HAP-1 (cell line): ENCODE measurements at regions of chr6 and their contacts with region 1.

Region 1: GRCh38 chr6:55886185-55886836 is 10.9 kb upstream of the BMP5 start:
- DNase-seq: peak in 1 of 2 experiments; percentile 34
- H3K4me3 ChIP-seq: no peak overlapping the region
- H3K4me1 ChIP-seq: no peaks in the 10 kb centered on the region
- H3K27me3 ChIP-seq: no peaks in the 10 kb centered on the region

Region 2: GRCh38 chr6:55617272-55617671 is 269.0 kb before region 1 on chr6:
- in situ Hi-C with region 1: loop called (anchors 25 kb)
- DNase-seq: peak; percentile 23 to 69
- H3K4me3 ChIP-seq: no peak overlapping the region
- H3K4me1 ChIP-seq: no peaks in the 10 kb centered on the region
- H3K27me3 ChIP-seq: no peaks in the 10 kb centered on the region

Region 3: DNA sequence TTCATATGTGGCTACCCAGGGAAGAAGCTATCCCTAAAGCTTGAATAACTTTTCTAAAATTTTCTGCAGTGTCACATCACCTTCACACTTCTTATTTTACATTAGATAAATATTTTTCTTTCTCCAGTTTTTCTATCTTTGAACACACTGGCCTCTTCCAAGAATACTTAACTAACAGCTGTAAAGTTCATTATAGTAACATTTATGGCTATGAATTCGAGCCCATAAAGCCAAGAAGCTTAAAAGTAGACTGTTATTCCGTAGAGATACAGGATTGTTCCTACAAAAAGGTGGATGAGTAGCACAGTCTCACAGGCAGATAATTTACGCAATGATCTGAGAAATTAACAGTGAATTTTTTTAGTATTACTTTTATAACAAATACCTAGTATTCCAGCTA is 44.8 kb after region 1 on chr6:
- in situ Hi-C with region 1: no loop called
- DNase-seq: no peak
- H3K4me3 ChIP-seq: no peak overlapping the region
- H3K4me1 ChIP-seq: no peaks in the 10 kb centered on the region
- H3K27me3 ChIP-seq: no peaks in the 10 kb centered on the region

Region 4: DNA sequence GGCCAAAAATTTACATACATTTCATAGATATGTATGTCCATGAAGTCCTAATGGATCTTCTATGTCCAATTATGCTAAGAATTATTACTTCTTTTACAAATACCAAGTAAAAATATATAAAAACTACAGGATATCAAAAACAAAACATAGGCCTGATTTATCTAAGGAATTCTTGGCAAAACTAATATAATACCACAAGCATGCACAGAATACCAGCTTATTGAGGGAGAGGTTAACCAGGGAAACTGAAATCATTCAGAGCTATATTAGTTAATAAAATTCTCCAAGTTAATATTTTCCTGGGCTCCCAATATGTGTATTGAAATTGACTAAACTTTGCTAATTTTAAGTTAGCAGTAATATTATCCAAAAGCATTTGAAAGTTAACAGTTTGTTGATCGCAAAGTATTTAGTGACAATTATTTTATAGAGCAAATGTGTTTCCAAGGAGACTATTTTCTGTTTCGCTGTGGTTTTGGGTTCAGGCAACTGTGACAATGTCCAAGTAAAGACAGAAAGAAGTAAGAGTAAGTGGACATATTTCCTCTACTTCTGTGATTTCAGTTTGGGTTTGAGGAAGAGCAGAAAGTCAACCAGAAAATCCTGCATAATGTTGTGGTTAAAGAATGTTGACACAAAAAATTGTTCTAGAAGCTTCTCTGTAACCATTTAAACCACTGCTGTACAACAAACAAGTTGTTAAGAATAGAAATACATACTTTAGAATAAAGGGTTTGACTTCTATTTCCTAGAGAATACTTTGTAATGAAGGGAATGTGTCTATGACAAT is 193.6 kb after region 1 on chr6:
- in situ Hi-C with region 1: no loop called
- DNase-seq: no peak
- H3K4me3 ChIP-seq: no peak overlapping the region
- H3K4me1 ChIP-seq: no peaks in the 10 kb centered on the region
- H3K27me3 ChIP-seq: no peaks in the 10 kb centered on the region

Region 5: GRCh38 chr6:56821005-56821432 is 934.7 kb after region 1 on chr6:
- in situ Hi-C with region 1: no loop called
- DNase-seq: no peak
- H3K4me3 ChIP-seq: no peak overlapping the region
- H3K4me1 ChIP-seq: peaks cover 3% of the 10 kb centered on the region; the same call in 1 of the 2 replicates
- H3K27me3 ChIP-seq: no peaks in the 10 kb centered on the region

Region 6: GRCh38 chr6:56862415-56863175 is 976.3 kb after region 1 on chr6:
- in situ Hi-C with region 1: no loop called
- DNase-seq: no peak
- H3K4me3 ChIP-seq: no peak overlapping the region
- H3K4me1 ChIP-seq: peaks cover 8% of the 10 kb centered on the region; the same call in 1 of the 2 replicates
- H3K27me3 ChIP-seq: no peaks in the 10 kb centered on the region